ENCODE measurements at regions of chr3 and their contacts with region 1.

Region 1: DNA sequence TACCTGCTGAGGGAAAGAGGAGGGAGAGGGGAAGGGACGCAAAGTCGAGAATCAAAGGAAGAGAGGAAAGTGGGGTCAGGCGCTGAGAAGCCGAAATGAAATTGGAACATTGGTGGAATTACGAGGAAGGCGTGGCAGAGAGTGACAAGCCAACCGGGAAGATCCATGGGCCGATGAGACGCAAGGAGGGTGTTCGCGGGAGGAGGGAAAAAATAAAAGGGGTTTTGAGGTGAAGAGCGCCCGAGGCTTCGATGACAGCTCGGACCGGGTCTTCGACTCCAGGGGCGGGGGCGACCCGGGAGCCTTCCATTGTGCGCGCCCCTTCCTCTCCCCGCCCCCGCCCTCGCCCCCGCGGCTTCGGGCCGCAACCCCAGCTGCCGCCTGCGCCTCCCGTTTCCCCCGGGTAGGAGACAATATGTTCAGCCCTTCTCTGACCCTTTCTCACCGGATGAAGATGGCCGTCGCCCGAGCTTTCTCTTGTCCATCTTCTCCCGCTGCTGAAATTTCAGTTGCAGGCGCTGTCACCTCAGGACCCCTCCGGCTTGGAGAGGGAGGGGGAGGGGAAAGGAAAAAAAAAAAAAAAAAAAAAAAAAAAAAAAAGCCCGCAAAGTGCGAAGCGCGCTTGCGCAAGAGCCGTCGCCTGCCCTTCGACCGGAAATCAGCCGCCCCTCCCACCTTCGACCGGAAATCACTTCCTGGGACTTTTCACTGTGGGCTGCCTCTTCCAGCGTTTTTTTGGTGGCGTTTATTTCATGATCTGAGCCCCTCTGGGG is at the start of gene SENP7:
- DNase-seq: peak; percentile 74
- ATAC-seq: peak; percentile 72
- H3K4me3 Mint-ChIP-seq: peak within 1 kb of the TSS; percentile 98
- H3K27ac Mint-ChIP-seq: peak within 1 kb of the TSS; percentile 99
- H3K4me1 Mint-ChIP-seq: peaks cover 35% of the 10 kb centered on the region
- H3K27me3 Mint-ChIP-seq: no peaks in the 10 kb centered on the region
- CTCF ChIP-seq: no peak
- total RNA-seq, gene SENP7: 18.6 and 22.1 TPM in 2 replicates

Region 2: GRCh38 chr3:101676765-101677435 is 164.1 kb after region 1 on chr3 and contains the start of gene ZBTB11:
- CTCF ChIA-PET with region 1: no interaction called
- POLR2A ChIA-PET with region 1: interaction called, 10 read pairs
- intact Hi-C with region 1: loop called (anchors 2 kb)
- DNase-seq: peak; percentile 99
- ATAC-seq: peak; percentile 68
- H3K4me3 Mint-ChIP-seq: peak within 1 kb of the TSS; percentile 93
- H3K27ac Mint-ChIP-seq: peak within 1 kb of the TSS; percentile 96
- H3K4me1 Mint-ChIP-seq: peaks cover 56% of the 10 kb centered on the region
- H3K27me3 Mint-ChIP-seq: no peaks in the 10 kb centered on the region
- CTCF ChIP-seq: no peak
- total RNA-seq, gene ZBTB11: 26.2 and 28.7 TPM in 2 replicates